ENCODE measurements at regions of chr12 and their contacts with region 1.

Region 1: GRCh38 chr12:6662906-6663742 is at the start of gene ING4:
- DNase-seq: peak; percentile 98
- ATAC-seq: peak; percentile 100
- total RNA-seq, gene ING4: 16.8 to 28.5 TPM

Region 2: DNA sequence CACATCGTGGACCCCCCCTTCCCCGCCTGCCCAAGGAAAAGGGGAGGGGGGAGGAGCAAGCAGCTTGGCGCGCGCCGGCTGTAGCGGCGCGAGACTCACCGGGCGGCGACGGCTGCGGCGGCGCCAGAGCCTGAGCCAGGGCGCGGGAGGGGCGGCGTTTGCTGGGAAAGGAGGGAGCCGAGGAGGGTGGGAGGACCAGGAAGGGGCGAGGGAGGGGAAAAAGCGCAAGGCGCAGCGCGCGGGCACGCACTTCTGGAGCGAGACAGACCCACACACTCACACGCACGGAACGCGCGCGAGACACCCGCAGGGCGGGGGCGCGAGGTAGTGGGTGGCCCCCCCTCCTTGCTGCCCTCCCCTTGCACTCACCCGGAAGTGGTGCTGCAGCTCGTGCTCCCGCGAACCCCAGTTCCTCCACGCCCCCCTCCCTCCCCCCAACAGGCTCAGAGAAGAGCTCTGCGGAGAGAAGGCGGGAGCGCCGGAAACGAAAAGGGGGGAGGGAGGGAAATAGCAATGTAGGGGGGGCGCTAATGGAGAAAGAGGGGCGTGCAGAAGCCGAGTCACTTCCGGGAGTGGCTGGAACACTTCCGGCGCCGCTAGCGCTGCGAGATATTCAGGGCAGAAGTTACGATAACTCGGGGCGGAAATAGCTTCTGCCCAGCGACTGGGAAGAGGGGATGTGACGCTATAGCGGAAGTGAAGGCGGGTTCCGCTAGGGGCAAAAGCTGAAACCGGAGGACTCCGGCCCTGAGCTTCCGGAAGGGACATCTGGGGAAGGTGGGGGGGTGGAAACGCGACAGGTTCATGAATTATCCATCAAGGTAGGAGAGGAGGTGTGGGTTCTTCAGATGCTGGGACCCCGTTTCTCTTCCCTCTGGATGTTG is 26.1 kb after region 1 on chr12 and contains the start of gene ZNF384:
- intact Hi-C with region 1: loop called in 1 of 2 experiments (anchors 1 kb)
- DNase-seq: peak; percentile 97
- ATAC-seq: peak; percentile 92 to 93
- total RNA-seq, gene ZNF384: 28.3 to 31.2 TPM

Region 3: GRCh38 chr12:6723607-6724396 is 60.7 kb after region 1 on chr12 and contains the start of gene COPS7A:
- intact Hi-C with region 1: loop called in 1 of 2 experiments (anchors 2 kb)
- DNase-seq: peak; percentile 99
- ATAC-seq: peak; percentile 98 to 99
- total RNA-seq, gene COPS7A: 61.3 to 71.2 TPM